PC-9 (cell line): ENCODE measurements at regions of chr16 and their contacts with region 1.

Region 1: GRCh38 chr16:29226782-29227181 is 179.7 kb downstream of the NPIPB11 start:
- DNase-seq: no peak
- H3K4me3 ChIP-seq: no peak overlapping the region
- H3K27ac ChIP-seq: no peak overlapping the region
- H3K4me1 ChIP-seq: no peaks in the 10 kb centered on the region; the same call in 1 of the 2 replicates
- H3K27me3 ChIP-seq: no peaks in the 10 kb centered on the region
- CTCF ChIP-seq: no peak

Region 2: GRCh38 chr16:28990375-28991040 is 236.3 kb before region 1 on chr16:
- CTCF ChIA-PET with region 1: no interaction called
- POLR2A ChIA-PET with region 1: no interaction called
- intact Hi-C with region 1: no loop called
- DNase-seq: no peak
- H3K4me3 ChIP-seq: no peak overlapping the region
- H3K27ac ChIP-seq: no peak overlapping the region
- H3K4me1 ChIP-seq: no peaks in the 10 kb centered on the region
- H3K27me3 ChIP-seq: no peaks in the 10 kb centered on the region
- CTCF ChIP-seq: no peak

Region 3: DNA sequence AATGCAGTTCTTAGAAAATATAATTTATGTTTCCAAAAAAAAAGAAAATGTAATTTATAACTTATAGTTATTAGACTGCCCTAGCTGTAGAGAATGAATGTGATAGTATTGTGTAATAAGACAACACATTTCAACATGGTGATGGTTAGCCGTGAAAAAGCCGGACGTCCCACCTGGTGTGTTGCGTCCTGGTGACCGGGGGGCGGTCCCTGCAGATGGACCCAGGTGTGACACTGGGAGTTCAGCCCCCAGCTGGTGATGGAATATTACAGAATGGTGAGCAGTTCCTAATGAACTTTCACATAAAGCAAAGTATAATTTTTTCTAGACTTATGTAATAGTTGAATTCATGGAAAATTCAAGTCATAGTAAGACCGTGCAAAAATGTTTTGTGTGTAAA is 109.2 kb before region 1 on chr16:
- CTCF ChIA-PET with region 1: no interaction called
- POLR2A ChIA-PET with region 1: no interaction called
- intact Hi-C with region 1: loop called (anchors 5 kb)
- DNase-seq: no peak
- H3K4me3 ChIP-seq: no peak overlapping the region
- H3K27ac ChIP-seq: no peak overlapping the region
- H3K4me1 ChIP-seq: peaks cover 3% of the 10 kb centered on the region; the same call in 1 of the 2 replicates
- H3K27me3 ChIP-seq: no peaks in the 10 kb centered on the region
- CTCF ChIP-seq: no peak